ENCODE measurements at regions of chr12 and their contacts with region 1.

Region 1: GRCh38 chr12:54017878-54018467 is 9.2 kb downstream of the HOXC8 start:
- DNase-seq: peak; percentile 93
- H3K4me3 ChIP-seq: peak overlapping the region; percentile 63 to 87 (median 69)
- H3K27ac ChIP-seq: peak overlapping the region; percentile 90
- H3K4me1 ChIP-seq: peaks cover 49% of the 10 kb centered on the region
- H3K27me3 ChIP-seq: no peaks in the 10 kb centered on the region
- CTCF ChIP-seq: no peak

Region 2: GRCh38 chr12:53917126-53917653 is 100.8 kb before region 1 on chr12:
- CTCF ChIA-PET with region 1: no interaction called
- dilution Hi-C with region 1: no loop called
- in situ Hi-C with region 1: no loop called
- intact Hi-C with region 1: no loop called
- DNase-seq: no peak
- H3K4me3 ChIP-seq: no peak overlapping the region
- H3K27ac ChIP-seq: no peak overlapping the region
- H3K4me1 ChIP-seq: no peaks in the 10 kb centered on the region
- H3K27me3 ChIP-seq: no peaks in the 10 kb centered on the region
- CTCF ChIP-seq: no peak

Region 3: DNA sequence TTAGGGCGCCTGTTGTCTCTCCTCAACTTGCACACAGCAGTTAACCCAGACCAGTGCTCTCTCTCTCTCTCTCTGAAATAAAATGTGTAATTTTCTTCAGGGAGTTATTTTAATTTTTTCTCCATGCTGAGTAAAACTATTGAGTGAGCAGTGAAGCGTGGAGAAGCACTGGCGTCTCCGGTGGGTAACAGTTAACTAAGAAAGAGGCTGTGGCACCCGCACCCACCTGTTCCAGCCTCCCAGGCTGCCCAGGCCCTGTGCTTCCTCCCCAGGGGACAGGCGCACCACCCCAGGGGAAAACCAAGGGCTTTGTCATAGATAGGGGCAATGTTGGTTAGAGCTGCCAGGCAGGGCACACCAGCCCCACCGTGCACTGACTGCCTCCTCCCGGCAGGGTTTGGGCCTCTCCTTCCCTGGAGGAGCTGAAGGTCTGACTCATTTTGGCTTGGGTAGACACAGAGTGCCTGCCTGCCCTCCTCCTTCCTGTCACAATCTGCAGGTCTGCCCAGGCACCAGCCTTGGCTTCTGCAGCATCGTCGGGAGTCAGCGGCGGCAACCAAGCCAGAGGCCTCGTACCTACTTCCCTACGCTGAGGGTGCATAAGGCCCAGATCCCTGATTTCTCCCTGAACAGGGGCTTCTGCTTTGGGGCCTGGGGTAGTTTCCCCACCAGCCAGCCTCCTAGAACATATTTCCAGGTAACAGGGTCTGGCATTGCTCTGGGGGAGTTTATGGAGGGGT is 18.8 kb after region 1 on chr12:
- CTCF ChIA-PET with region 1: no interaction called
- dilution Hi-C with region 1: no loop called
- in situ Hi-C with region 1: no loop called
- intact Hi-C with region 1: no loop called
- DNase-seq: peak; percentile 71
- H3K4me3 ChIP-seq: no peak overlapping the region
- H3K27ac ChIP-seq: no peak overlapping the region
- H3K4me1 ChIP-seq: peaks cover 27% of the 10 kb centered on the region
- H3K27me3 ChIP-seq: no peaks in the 10 kb centered on the region
- CTCF ChIP-seq: peak; percentile 34 to 59

Region 4: DNA sequence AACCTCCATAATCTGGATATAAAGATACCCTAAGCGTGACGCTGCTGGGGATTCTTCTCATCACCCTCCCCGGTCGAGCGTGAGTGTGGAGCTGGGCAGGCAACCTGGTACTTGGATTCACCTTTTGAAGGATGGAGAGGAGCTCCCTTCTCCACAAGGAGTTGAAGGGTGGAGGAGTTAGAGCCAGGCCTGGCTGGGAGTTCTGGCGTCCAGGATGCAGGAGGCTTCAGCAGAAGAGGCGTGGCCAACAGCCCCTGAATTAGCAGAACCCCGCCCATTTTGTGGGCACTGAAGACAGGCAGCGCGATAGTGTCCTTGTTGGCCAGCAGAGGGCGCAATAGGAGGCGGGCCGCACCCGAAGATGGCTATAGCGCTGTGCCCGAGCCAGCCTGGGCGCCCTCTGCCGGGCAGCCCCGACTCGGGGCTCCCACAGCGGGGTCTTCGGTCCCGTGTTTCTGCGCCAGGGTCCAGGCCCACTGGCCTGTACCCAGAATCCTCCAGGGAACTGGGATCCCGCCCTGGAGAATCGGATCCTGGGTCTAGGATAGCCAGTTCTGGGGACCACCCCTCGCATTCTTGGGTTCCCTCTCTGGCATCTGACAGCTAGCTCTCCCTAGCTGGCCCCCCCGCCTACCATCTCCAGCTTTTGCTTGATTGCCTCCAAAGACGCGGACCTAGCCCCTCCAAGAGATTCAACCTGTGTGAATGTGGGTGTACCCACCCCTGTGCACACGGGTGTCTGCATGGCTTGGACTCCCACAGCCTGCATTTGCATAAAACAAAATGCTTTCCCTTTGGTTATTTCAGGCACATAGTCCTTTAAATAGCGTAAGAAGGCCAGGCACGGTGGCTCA is 196.8 kb after region 1 on chr12:
- CTCF ChIA-PET with region 1: no interaction called
- dilution Hi-C with region 1: loop called (anchors 10 kb)
- in situ Hi-C with region 1: no loop called
- intact Hi-C with region 1: no loop called
- DNase-seq: peak; percentile 72
- H3K4me3 ChIP-seq: peak overlapping the region; percentile 19 to 29 (median 20)
- H3K27ac ChIP-seq: no peak overlapping the region
- H3K4me1 ChIP-seq: peaks cover 14% of the 10 kb centered on the region
- H3K27me3 ChIP-seq: no peaks in the 10 kb centered on the region
- CTCF ChIP-seq: peak; percentile 91 to 98

Region 5: DNA sequence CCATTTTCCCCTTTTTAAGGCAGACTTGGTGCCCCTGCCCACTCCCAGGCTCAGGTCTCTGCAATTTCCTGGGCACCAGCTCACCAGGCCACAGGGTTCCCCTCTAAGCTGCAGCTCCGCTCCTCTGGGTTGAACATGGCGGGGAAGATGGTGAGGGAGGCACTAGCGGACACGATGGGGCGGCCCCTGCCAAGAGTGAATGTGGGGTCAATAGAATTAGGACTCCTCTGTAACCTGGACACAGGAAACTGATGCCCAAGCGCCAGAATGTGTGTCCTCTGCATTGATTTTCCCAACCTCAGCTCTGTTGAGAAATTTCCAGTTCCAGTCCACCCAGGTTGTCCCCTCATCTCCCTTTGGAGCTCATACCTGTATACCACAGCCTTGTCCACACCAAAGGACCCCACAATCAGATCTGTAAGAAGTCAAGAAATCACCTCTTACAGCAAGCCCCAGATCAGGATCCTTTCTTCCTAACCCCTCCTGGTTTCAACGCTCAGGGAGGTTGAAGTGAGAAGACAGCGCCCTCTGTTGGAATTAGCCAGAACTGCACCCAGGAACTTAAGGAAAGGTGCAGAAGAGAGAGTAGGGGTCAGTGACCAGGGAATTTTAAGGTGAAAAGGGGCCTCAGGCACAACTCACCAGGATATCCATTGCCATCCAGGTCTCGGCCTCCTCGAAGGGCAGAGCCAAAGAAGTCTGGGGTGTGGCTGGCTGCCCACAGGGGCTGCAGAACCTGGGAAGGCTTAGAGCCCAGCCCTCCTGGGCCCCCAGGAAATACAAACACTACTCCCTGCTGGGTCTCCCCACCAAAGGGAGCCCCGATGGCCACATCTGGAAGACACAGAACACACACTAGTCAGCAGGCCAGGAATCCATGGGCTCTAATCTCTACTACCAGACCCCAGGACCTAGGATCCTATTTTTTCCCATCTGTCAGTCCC is 386.4 kb after region 1 on chr12:
- CTCF ChIA-PET with region 1: no interaction called
- dilution Hi-C with region 1: no loop called
- in situ Hi-C with region 1: no loop called
- intact Hi-C with region 1: no loop called
- DNase-seq: no peak
- H3K4me3 ChIP-seq: no peak overlapping the region
- H3K27ac ChIP-seq: no peak overlapping the region
- H3K4me1 ChIP-seq: no peaks in the 10 kb centered on the region
- H3K27me3 ChIP-seq: no peaks in the 10 kb centered on the region
- CTCF ChIP-seq: peak; percentile 91 to 97